Right ventricle myocardium inferior (tissue), 1 donor: ENCODE measurements at regions of chr12 and their contacts with region 1.

Region 1: GRCh38 chr12:55926738-55927587 is 731 bp downstream of the PYM1 start:
- DNase-seq: peak; percentile 92
- ATAC-seq: peak; percentile 88

Region 2: GRCh38 chr12:55829967-55830600 is 96.9 kb before region 1 on chr12:
- intact Hi-C with region 1: loop called (anchors 2 kb)
- DNase-seq: peak; percentile 86
- ATAC-seq: peak; percentile 26

Region 3: DNA sequence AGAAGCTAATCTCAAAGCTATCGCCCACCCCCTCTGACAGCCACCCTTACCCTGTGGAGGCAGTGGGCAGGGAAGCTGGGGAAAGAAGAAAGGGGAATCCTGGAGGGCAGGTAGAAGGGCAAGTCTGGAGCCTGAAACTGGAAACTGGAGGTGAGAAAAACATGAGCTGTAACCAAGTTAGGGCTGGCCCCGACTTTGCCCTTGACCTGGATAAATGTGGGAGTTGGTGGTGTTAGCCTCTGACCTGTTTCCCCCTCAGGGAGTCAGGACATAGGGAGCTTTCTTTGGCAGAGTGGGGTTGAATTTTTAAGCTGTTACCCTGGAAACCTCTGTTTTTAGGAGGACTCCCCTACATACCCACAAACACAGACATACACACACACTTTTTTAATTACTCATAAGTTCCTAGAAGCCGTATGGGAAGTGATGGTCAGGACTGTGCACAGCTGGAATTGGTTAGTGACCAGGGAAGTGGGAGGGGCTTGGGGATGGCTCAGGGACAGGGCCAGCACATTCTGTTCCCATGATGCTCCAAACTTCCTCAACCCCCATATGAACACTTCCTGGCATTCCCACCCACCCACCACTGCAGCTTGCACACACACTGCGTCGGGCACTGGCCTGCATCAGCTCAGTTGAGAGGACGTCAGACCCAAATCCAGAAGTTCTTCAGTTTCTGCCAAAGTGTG is 79.2 kb before region 1 on chr12:
- intact Hi-C with region 1: loop called (anchors 2 kb)
- DNase-seq: peak; percentile 93
- ATAC-seq: peak; percentile 97

Region 4: DNA sequence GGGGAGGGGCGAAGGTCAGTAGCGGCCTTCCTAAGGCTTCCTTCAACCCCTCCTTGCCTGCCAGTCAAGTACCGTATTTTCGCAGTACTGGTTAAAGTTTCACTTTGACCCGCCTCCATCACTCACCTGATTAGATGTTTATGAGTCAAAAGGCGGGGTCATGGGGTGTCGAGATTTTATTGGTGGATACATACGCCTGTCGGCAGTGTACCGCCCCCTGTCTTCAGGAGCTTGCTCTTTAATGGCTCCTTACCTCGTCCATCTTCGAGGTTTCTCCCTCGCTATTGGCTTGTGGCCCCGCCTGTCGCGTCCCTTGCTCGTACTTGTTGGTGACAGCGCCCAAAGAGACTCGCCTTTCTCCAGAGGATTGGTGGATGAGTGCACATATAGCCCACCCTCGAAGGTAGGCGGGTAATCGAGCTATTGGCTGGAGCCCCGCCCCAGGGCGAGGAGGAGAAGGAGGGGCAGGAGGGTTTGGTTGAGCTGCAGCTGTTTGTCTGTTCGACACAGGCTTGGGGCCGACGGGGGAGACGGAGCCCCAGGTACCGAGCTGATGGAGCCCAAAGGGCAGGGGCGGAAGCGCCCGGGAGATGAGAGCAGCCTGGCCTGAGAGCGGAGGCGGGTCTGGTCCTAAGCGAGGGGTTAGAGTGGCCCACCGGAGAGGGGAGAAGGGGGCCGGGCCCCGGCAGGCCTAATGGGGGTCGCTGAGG is 46.8 kb after region 1 on chr12 and contains the start of gene RAB5B:
- intact Hi-C with region 1: loop called (anchors 2 kb)
- DNase-seq: peak; percentile 99
- ATAC-seq: peak; percentile 95
- total RNA-seq, gene RAB5B: 113 TPM